B cell (primary cell): ENCODE measurements at regions of chr7 and their contacts with region 1.

Region 1: DNA sequence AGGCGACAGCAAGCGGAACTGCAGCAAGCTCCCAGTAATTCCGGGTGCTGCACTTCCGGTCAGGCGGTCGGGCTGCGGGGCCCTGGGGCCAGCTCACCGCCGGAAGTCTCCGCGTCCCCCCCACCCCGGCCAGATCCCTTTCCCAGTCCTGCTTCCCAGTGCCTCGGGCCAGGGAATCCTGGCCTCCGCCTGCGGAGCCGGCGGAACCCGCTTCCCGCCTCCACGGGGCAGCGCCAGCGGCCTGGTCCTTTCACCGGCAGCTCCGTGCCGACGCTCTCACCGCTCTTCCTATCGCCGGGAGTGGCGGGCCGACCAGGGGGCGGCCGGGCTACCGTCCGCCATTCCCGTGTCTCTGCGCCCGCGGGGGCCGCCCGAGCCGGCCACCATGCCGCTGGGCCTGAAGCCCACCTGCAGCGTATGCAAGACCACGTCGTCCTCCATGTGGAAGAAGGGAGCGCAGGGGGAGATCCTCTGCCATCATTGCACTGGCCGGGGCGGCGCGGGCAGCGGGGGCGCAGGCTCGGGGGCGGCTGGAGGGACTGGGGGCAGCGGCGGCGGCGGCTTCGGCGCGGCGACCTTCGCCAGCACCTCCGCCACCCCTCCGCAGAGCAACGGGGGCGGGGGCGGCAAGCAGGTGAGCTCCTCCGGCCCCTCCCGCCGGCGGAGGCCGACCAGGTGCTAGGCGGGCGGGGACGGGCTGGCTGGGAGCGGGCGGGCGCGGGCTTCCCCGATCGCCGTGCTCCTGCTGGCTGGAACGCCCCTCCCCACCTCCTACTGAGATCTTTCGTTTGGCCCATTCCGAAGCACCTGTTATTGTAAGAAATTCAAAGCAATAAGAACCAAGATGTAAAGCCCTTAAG is at the start of gene GATAD1:
- DNase-seq: peak; percentile 91
- ATAC-seq: peak; percentile 84
- H3K4me3 ChIP-seq: peak within 1 kb of the TSS; percentile 69 to 97 (median 93)
- H3K4me3 Mint-ChIP-seq: peak within 1 kb of the TSS; percentile 94
- H3K27ac ChIP-seq: peak within 1 kb of the TSS; percentile 89 to 97
- H3K27ac Mint-ChIP-seq: peak within 1 kb of the TSS; percentile 97
- H3K4me1 ChIP-seq: peaks cover 6 to 12% of the 10 kb centered on the region in 2 donors
- H3K4me1 Mint-ChIP-seq: peaks cover 8% of the 10 kb centered on the region
- H3K27me3 ChIP-seq: no peaks in the 10 kb centered on the region
- H3K27me3 Mint-ChIP-seq: no peaks in the 10 kb centered on the region
- CTCF ChIP-seq: peak; percentile 84
- total RNA-seq, gene GATAD1: 65.9 and 71.7 TPM in 2 replicates

Region 2: GRCh38 chr7:91089382-91089963 is 1358.1 kb before region 1 on chr7:
- CTCF ChIA-PET with region 1: no interaction called
- POLR2A ChIA-PET with region 1: no interaction called
- intact Hi-C with region 1: loop called (anchors 10 kb)
- DNase-seq: peak; percentile 57
- ATAC-seq: peak; percentile 58
- H3K4me3 ChIP-seq: no peak overlapping the region
- H3K4me3 Mint-ChIP-seq: peak overlapping the region; percentile 21
- H3K27ac ChIP-seq: no peak overlapping the region
- H3K27ac Mint-ChIP-seq: no peak overlapping the region
- H3K4me1 ChIP-seq: peaks cover 0 to 4% of the 10 kb centered on the region in 2 donors
- H3K4me1 Mint-ChIP-seq: peaks cover 7% of the 10 kb centered on the region
- H3K27me3 ChIP-seq: no peaks in the 10 kb centered on the region
- H3K27me3 Mint-ChIP-seq: no peaks in the 10 kb centered on the region
- CTCF ChIP-seq: peak; percentile 95

Region 3: GRCh38 chr7:91880413-91881241 is 566.9 kb before region 1 on chr7 and contains the start of gene MTERF1:
- CTCF ChIA-PET with region 1: interaction called, 13 read pairs
- POLR2A ChIA-PET with region 1: no interaction called
- intact Hi-C with region 1: loop called (anchors 1 kb)
- DNase-seq: peak; percentile 95
- ATAC-seq: peak; percentile 96
- H3K4me3 ChIP-seq: peak within 1 kb of the TSS; percentile 82 to 97 (median 85)
- H3K4me3 Mint-ChIP-seq: peak within 1 kb of the TSS; percentile 95
- H3K27ac ChIP-seq: peak within 1 kb of the TSS; percentile 65 to 72
- H3K27ac Mint-ChIP-seq: peak within 1 kb of the TSS; percentile 87
- H3K4me1 ChIP-seq: peaks cover 10 to 12% of the 10 kb centered on the region in 2 donors
- H3K4me1 Mint-ChIP-seq: peaks cover 30% of the 10 kb centered on the region
- H3K27me3 ChIP-seq: no peaks in the 10 kb centered on the region
- H3K27me3 Mint-ChIP-seq: peaks cover 2% of the 10 kb centered on the region
- CTCF ChIP-seq: peak; percentile 88
- total RNA-seq, gene MTERF1: 33.7 and 34.4 TPM in 2 replicates

Region 4: DNA sequence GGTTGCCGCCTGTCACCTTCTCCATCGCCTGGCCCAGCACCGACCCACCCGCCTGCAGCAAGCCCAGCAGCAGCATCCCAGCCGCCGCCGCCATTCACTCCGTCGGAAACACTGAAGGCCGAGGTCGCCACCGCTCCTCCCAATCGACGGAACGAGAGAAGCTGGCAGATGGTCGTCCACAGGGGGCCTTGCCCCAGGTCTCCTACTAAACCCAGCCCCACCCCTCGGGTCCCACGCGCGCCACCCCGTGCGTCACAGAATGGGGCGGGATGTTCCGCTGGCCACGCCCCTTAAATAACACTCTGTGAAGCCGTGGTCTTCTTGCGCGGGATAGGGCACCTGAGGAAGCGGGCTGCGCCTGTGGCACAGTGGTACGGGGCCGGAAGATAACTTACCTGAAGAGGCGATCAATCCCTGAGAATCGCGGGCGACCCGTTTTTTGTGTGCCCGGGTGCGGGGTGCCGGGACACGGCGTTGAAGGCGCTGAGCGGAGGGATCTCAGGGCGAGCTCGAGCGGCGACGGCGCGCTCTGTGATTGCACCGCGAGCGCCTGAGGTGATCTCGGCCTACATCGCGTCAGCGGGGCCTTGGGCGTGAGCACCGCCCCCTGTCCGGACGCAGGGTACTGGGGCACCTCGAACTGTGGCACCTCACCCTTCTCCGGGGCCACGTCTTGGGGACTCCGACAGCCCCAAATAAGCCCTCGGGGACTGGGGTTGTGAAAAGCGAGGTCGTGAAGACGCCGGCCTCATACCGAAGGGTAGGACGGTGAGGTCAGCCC is 313.1 kb before region 1 on chr7 and contains the start of gene CYP51A1:
- CTCF ChIA-PET with region 1: interaction called, 6 read pairs
- POLR2A ChIA-PET with region 1: interaction called, 3 read pairs
- intact Hi-C with region 1: loop called (anchors 1 kb)
- DNase-seq: peak; percentile 99
- ATAC-seq: peak; percentile 84
- H3K4me3 ChIP-seq: peak within 1 kb of the TSS; percentile 86 to 94 (median 90)
- H3K4me3 Mint-ChIP-seq: peak within 1 kb of the TSS; percentile 99
- H3K27ac ChIP-seq: peak within 1 kb of the TSS; percentile 94 to 98
- H3K27ac Mint-ChIP-seq: peak within 1 kb of the TSS; percentile 100
- H3K4me1 ChIP-seq: peaks cover 18 to 27% of the 10 kb centered on the region in 2 donors
- H3K4me1 Mint-ChIP-seq: peaks cover 39% of the 10 kb centered on the region
- H3K27me3 ChIP-seq: no peaks in the 10 kb centered on the region
- H3K27me3 Mint-ChIP-seq: no peaks in the 10 kb centered on the region
- CTCF ChIP-seq: no peak
- total RNA-seq, gene CYP51A1: 36.1 and 37.9 TPM in 2 replicates

Region 5: DNA sequence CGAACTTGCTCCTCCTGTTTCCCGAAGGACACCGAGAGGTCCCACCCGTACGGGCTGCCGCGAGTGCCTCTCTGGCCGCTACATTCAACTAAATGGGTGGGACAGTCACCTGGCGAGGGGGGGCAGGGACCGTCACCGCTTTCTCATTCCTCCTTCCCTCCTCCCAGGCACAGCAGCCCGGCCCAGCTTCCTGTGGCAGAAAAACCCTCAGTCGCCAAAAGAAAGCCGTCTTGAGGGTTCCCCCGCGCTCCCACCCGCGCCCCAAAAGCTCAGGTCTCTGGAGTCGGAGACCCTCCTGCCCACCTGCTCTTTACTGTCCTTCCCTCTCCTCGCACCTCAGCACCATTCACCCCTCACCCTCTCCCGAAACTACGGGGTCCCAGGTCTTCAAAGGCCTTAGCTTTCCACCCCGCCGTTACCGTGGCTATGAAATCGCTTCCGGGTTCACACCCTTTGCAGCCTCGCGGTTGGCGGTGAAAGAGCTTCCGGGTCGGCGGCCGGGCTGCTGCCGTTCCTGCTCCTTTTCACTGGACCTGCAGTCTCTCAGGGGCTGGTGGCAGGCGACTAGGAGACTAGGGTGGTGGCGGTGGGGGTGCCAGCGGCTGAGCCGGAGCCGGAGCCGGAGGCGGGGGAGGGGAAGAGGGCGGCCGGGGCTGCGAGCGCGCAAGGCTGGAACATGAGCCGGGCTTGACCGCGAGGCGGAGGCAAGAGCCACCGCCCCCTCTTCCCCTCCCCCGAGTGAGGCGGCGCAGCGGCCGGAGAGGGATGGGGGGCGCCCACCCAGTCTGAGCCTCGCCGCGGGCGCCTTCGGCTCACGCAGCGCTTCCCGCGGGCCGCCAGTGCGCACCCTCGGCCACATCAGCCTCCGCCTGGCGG is 201.8 kb before region 1 on chr7 and contains the starts of genes ANKIB1 and KRIT1:
- CTCF ChIA-PET with region 1: interaction called, 16 read pairs
- POLR2A ChIA-PET with region 1: interaction called, 5 read pairs
- intact Hi-C with region 1: loop called (anchors 1 kb)
- DNase-seq: peak; percentile 92
- ATAC-seq: peak; percentile 78
- H3K4me3 ChIP-seq: peak within 1 kb of the TSS; percentile 55 to 83 (median 81)
- H3K4me3 Mint-ChIP-seq: peak within 1 kb of the TSS; percentile 99
- H3K27ac ChIP-seq: peak within 1 kb of the TSS; percentile 84 to 97
- H3K27ac Mint-ChIP-seq: peak within 1 kb of the TSS; percentile 99
- H3K4me1 ChIP-seq: peaks cover 15 to 31% of the 10 kb centered on the region in 2 donors
- H3K4me1 Mint-ChIP-seq: peaks cover 39% of the 10 kb centered on the region
- H3K27me3 ChIP-seq: no peaks in the 10 kb centered on the region
- H3K27me3 Mint-ChIP-seq: no peaks in the 10 kb centered on the region
- CTCF ChIP-seq: peak; percentile 20
- total RNA-seq, gene ANKIB1: 76.7 and 77.5 TPM in 2 replicates
- total RNA-seq, gene KRIT1: 78.1 and 85.1 TPM in 2 replicates

Region 6: GRCh38 chr7:92528188-92528957 is 80.8 kb after region 1 on chr7 and contains the starts of genes PEX1 and RBM48:
- CTCF ChIA-PET with region 1: interaction called, 20 read pairs
- POLR2A ChIA-PET with region 1: interaction called, 17 read pairs
- intact Hi-C with region 1: loop called (anchors 1 kb)
- DNase-seq: peak; percentile 98
- ATAC-seq: peak; percentile 91
- H3K4me3 ChIP-seq: peak within 1 kb of the TSS; percentile 81 to 99 (median 95)
- H3K4me3 Mint-ChIP-seq: peak within 1 kb of the TSS; percentile 88
- H3K27ac ChIP-seq: peak within 1 kb of the TSS; percentile 89 to 96
- H3K27ac Mint-ChIP-seq: peak within 1 kb of the TSS; percentile 95
- H3K4me1 ChIP-seq: peaks cover 14 to 19% of the 10 kb centered on the region in 2 donors
- H3K4me1 Mint-ChIP-seq: peaks cover 26% of the 10 kb centered on the region
- H3K27me3 ChIP-seq: no peaks in the 10 kb centered on the region
- H3K27me3 Mint-ChIP-seq: no peaks in the 10 kb centered on the region
- CTCF ChIP-seq: peak; percentile 31
- total RNA-seq, gene PEX1: 33.7 and 34.8 TPM in 2 replicates
- total RNA-seq, gene RBM48: 32.9 and 36.8 TPM in 2 replicates